Adrenal gland (tissue), 19 donors: ENCODE measurements at regions of chr12 and their contacts with region 1.

Region 1: GRCh38 chr12:132414634-132415326 is 75.2 kb upstream of the FBRSL1 start:
- DNase-seq: peak; percentile 80 to 89 (median 84)
- H3K4me3 ChIP-seq: no peak overlapping the region
- H3K27ac ChIP-seq: no peak overlapping the region
- H3K4me1 ChIP-seq: no peaks in the 10 kb centered on the region
- H3K27me3 ChIP-seq: peaks cover 19% of the 10 kb centered on the region
- CTCF ChIP-seq: peak; percentile 89 to 96 (median 93)
- POLR2A ChIP-seq: no peak

Region 2: GRCh38 chr12:132523576-132524331 is 109.0 kb after region 1 on chr12:
- intact Hi-C with region 1: loop called (anchors 5 kb)
- DNase-seq: peak; percentile 59 to 87 (median 73)
- H3K4me3 ChIP-seq: no peak overlapping the region
- H3K27ac ChIP-seq: peak overlapping the region in 1 of 5 donors; percentile 66
- H3K4me1 ChIP-seq: peaks cover 13 to 18% of the 10 kb centered on the region in 2 donors
- H3K27me3 ChIP-seq: no peaks in the 10 kb centered on the region
- CTCF ChIP-seq: peak; percentile 53 to 79 (median 66)
- POLR2A ChIP-seq: no peak

Region 3: GRCh38 chr12:132788375-132789098 is 373.8 kb after region 1 on chr12:
- intact Hi-C with region 1: no loop called
- DNase-seq: no peak
- H3K4me3 ChIP-seq: no peak overlapping the region
- H3K27ac ChIP-seq: no peak overlapping the region
- H3K4me1 ChIP-seq: no peaks in the 10 kb centered on the region
- H3K27me3 ChIP-seq: no peaks in the 10 kb centered on the region
- CTCF ChIP-seq: no peak
- POLR2A ChIP-seq: no peak